ENCODE measurements at regions of chr11 and their contacts with region 1.

Region 1: GRCh38 chr11:103257360-103257759 is 148.1 kb downstream of the DYNC2H1 start:
- DNase-seq: no peak
- ATAC-seq: no peak
- H3K4me3 ChIP-seq: no peak overlapping the region
- H3K27ac ChIP-seq: no peak overlapping the region
- H3K4me1 ChIP-seq: no peaks in the 10 kb centered on the region
- H3K27me3 ChIP-seq: no peaks in the 10 kb centered on the region
- CTCF ChIP-seq: no peak
- EP300 ChIP-seq: no peak
- POLR2A ChIP-seq: no peak
- RAD21 ChIP-seq: no peak

Region 2: DNA sequence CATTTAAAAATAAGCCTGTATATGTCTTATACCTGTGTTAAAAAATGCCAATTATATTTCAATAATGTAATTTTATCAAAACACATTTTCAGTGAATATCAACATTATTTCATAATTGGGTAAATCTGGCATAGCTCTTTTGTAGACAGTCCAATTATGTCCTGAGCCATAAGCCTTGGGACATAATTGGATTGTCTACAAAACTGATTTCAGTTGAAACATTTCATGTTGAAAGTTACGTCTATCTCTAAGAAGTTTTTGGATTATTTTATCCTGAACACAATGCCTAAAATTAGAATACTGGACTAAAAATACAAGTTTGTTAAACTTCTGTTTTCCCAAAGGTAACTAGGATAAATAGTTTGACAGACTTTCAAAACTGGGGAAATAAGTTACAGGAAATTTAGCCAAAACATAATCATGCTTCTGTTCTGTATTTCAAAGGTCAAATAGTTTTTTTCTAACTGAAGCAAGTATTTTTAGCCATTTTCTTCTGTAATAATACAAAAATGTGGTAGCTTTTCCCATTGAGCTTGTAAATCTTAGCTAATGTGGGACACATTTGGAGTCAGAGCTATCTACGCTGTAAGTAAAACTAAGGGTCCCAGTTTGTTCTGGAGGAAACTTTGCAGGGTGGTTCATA is 1040.8 kb before region 1 on chr11:
- CTCF ChIA-PET with region 1: no interaction called
- POLR2A ChIA-PET with region 1: no interaction called
- in situ Hi-C with region 1: loop called (anchors 10 kb)
- intact Hi-C with region 1: no loop called
- DNase-seq: no peak
- ATAC-seq: no peak
- H3K4me3 ChIP-seq: no peak overlapping the region
- H3K27ac ChIP-seq: no peak overlapping the region
- H3K4me1 ChIP-seq: no peaks in the 10 kb centered on the region
- H3K27me3 ChIP-seq: peaks cover 0 to 5% of the 10 kb centered on the region in 2 experiments; a peak in 2 of 5 replicates
- CTCF ChIP-seq: no peak
- EP300 ChIP-seq: no peak
- POLR2A ChIP-seq: no peak
- RAD21 ChIP-seq: no peak

Region 3: GRCh38 chr11:103430461-103430860 is 173.1 kb after region 1 on chr11:
- CTCF ChIA-PET with region 1: no interaction called
- POLR2A ChIA-PET with region 1: no interaction called
- in situ Hi-C with region 1: no loop called
- intact Hi-C with region 1: no loop called
- DNase-seq: no peak
- ATAC-seq: no peak
- H3K4me3 ChIP-seq: no peak overlapping the region
- H3K27ac ChIP-seq: no peak overlapping the region
- H3K4me1 ChIP-seq: no peaks in the 10 kb centered on the region
- H3K27me3 ChIP-seq: no peaks in the 10 kb centered on the region
- CTCF ChIP-seq: no peak
- EP300 ChIP-seq: no peak
- POLR2A ChIP-seq: no peak
- RAD21 ChIP-seq: no peak